ENCODE measurements at regions of chr18 and their contacts with region 1.

Region 1: DNA sequence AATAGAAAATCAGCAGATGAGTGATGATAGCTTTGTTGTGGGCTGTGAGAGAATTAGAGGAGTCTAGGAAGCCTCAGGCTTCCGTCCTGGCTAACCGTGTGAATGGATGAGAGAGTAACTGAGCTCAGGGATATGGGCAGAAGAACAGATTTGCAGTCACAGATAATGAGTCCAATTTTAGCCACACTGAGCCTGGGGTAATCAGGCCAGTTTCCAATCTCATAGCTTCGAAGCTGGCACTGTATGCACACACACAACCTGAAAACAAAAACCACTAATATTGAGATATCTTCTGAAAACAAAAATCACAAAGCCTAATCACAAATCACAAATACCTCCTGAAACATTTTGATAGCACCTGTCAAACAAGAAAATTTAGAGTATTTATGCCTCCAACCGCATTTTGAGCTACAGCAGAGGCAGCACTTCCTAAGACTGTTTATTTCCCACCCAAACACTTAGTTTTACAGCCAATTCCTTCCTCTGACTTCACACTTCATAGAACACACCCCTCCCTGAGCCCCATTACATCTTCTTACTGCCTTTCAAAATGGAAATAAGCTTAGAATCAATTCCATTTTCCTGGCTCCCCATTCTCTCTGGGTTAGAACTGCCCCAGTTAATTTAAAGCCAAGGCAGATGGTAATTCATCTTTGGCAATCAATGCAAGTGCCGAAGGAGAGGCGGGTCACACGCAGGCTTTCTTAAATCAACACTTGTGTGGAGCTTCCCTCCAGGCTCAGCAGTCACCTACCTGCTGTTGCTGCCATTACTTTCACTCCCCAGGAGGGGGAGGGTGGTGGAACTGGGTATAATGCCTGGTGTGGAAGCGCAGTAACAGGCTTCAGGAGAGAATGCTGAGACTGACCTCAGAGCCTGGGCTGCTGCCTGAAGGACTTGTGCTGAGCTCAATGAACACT is 18.9 kb downstream of the TTR start:
- H3K4me3 ChIP-seq: no peak overlapping the region
- H3K27ac ChIP-seq: no peak overlapping the region
- H3K4me1 ChIP-seq: no peaks in the 10 kb centered on the region
- CTCF ChIP-seq: no peak; the same call in 1 of the 2 replicates

Region 2: GRCh38 chr18:31680831-31681568 is 70.5 kb after region 1 on chr18:
- CTCF ChIA-PET with region 1: interaction called, 10 read pairs
- POLR2A ChIA-PET with region 1: no interaction called
- H3K4me3 ChIP-seq: no peak overlapping the region
- H3K27ac ChIP-seq: no peak overlapping the region
- H3K4me1 ChIP-seq: peaks cover 2% of the 10 kb centered on the region
- CTCF ChIP-seq: 0 out of 2 replicates have a peak, but pooled peaks have one; percentile 11

Region 3: DNA sequence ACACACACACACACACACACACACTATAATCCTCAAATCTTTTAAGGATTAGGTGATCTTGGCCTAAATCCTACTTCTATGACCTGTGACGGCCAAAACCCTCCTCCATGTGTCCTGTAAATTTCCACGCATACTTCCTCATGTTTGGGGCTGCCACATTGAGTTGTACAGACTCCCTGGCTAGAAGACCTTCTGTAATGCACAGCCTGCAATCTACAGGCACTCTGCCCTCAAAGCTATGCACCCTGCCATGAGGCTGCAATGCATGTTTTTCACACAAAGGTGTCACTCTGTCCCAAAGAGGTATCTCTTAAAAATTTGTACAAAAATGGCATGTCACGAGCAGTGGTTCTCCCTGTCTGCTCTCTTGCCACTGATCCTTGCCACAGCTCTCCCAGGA is 100.3 kb after region 1 on chr18:
- CTCF ChIA-PET with region 1: no interaction called
- POLR2A ChIA-PET with region 1: interaction called, 10 read pairs
- H3K4me3 ChIP-seq: no peak overlapping the region
- H3K27ac ChIP-seq: no peak overlapping the region
- H3K4me1 ChIP-seq: no peaks in the 10 kb centered on the region
- CTCF ChIP-seq: no peak